SK-N-SH (cell line): ENCODE measurements at regions of chr2 and their contacts with region 1.

Region 1: GRCh38 chr2:1550658-1551316 is 137.5 kb downstream of the TPO start:
- DNase-seq: peak; percentile 96
- H3K4me3 ChIP-seq: peak overlapping the region in 1 of 2 experiments; percentile 25; a peak in 1 of 4 replicates
- H3K27ac ChIP-seq: no peak overlapping the region
- H3K4me1 ChIP-seq: peaks cover 0 to 18% of the 10 kb centered on the region in 2 experiments; a peak in 1 of 4 replicates
- H3K27me3 ChIP-seq: no peaks in the 10 kb centered on the region
- CTCF ChIP-seq: peak; percentile 99
- EP300 ChIP-seq: no peak
- RAD21 ChIP-seq: peak; percentile 73

Region 2: GRCh38 chr2:960061-960736 is 590.6 kb before region 1 on chr2:
- CTCF ChIA-PET with region 1: interaction called, 65 read pairs
- POLR2A ChIA-PET with region 1: no interaction called
- DNase-seq: no peak
- H3K4me3 ChIP-seq: no peak overlapping the region
- H3K27ac ChIP-seq: no peak overlapping the region
- H3K4me1 ChIP-seq: peaks cover 0 to 2% of the 10 kb centered on the region in 2 experiments; a peak in 1 of 4 replicates
- H3K27me3 ChIP-seq: no peaks in the 10 kb centered on the region
- CTCF ChIP-seq: no peak
- EP300 ChIP-seq: no peak
- RAD21 ChIP-seq: no peak

Region 3: DNA sequence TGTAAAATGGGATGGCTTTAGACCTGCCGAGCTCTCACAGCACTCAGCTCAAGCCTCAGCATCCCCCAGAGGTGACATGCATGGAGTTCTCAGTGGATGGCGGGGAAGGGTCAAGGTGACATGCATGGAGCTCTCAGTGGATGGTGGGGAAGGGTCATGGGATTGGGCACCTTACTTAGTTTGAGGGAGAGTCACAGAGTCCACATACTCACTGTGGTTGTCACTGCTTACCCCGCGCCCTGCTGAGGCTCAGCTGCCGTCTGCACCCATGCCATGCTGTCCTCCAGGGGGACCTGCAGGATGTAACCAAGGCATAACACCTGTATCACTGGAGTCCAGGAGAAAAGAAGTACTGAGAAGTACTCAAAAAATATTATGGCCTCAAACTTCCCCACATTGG is 249.7 kb before region 1 on chr2:
- CTCF ChIA-PET with region 1: no interaction called
- POLR2A ChIA-PET with region 1: no interaction called
- DNase-seq: no peak
- H3K4me3 ChIP-seq: no peak overlapping the region
- H3K27ac ChIP-seq: no peak overlapping the region
- H3K4me1 ChIP-seq: no peaks in the 10 kb centered on the region
- H3K27me3 ChIP-seq: no peaks in the 10 kb centered on the region
- CTCF ChIP-seq: no peak
- EP300 ChIP-seq: no peak
- RAD21 ChIP-seq: no peak

Region 4: GRCh38 chr2:1432726-1433125 is 118.1 kb before region 1 on chr2:
- CTCF ChIA-PET with region 1: interaction called, 10 read pairs
- POLR2A ChIA-PET with region 1: no interaction called
- DNase-seq: no peak
- H3K4me3 ChIP-seq: no peak overlapping the region
- H3K27ac ChIP-seq: no peak overlapping the region
- H3K4me1 ChIP-seq: no peaks in the 10 kb centered on the region
- H3K27me3 ChIP-seq: no peaks in the 10 kb centered on the region
- CTCF ChIP-seq: no peak
- EP300 ChIP-seq: no peak
- RAD21 ChIP-seq: no peak

Region 5: DNA sequence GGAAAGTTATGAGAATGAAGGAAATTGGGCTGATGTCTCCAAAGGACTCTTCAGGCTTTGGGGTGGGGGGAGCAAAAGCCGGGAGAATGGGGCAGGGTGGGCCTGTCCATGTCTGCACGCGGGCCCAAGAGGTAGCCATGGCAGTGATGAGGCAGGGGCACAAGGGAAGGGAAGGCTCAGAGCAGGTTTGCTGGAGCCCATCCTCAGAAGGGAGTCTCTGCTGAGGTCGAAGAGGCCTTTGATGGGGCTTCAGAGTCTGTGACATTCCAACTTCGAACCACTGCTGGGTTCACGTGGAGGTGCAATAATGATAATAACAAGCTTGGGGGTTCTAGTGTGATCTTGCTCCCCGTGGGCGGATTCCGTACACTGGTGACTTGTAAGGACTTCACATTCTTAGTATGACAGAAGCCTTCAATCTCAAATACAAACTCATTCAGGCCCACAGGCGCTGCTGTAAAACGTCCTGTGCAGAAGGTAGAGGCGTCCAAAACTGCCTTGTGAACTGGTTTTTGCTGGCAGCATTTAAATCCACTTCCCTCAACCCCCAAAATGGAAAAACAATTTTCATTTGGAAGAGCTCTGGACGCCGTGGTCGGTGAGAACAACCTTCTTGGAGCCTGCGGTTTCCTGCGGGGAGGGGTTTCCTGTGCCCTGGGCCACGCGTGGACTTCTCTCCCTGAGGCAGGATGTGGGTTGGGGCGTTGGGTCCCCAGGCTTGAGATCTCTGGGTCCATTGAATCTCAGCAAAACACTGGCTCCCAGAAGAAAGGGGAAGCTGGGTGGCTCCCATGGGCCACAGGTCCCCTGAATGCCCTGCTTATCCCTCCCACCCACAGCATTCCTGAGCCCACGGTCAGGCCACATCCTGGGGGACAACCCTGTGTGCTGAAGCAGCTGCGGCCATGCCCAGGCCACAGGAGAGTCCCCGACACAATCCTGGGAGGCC is 13.4 kb after region 1 on chr2:
- CTCF ChIA-PET with region 1: interaction called, 108 read pairs
- POLR2A ChIA-PET with region 1: interaction called, 3 read pairs
- DNase-seq: no peak
- H3K4me3 ChIP-seq: no peak overlapping the region
- H3K27ac ChIP-seq: no peak overlapping the region
- H3K4me1 ChIP-seq: no peaks in the 10 kb centered on the region
- H3K27me3 ChIP-seq: no peaks in the 10 kb centered on the region
- CTCF ChIP-seq: no peak
- EP300 ChIP-seq: no peak
- RAD21 ChIP-seq: no peak

Region 6: DNA sequence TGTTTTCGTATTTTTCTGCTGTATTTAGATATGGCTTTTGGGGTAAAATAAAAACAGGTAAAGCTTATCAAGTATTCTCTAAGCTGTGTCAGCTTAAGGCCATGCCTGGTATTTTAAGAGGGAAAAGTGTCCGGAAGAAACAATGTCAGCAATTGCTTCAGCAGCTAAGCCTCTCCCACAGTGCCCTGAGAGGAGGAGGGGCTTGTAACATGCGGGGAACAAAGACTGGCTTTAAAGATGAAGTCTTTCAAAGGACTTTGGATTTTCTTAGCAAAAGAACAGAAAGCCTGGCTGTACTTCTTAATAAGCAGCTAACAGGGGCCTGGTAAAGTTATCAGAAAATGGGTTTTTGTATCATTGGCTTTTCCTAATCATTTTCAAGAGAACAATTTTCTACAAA is 90.7 kb after region 1 on chr2:
- CTCF ChIA-PET with region 1: interaction called, 13 read pairs
- POLR2A ChIA-PET with region 1: no interaction called
- DNase-seq: no peak
- H3K4me3 ChIP-seq: no peak overlapping the region
- H3K27ac ChIP-seq: no peak overlapping the region
- H3K4me1 ChIP-seq: peaks cover 0 to 22% of the 10 kb centered on the region in 2 experiments; a peak in 1 of 4 replicates
- H3K27me3 ChIP-seq: no peaks in the 10 kb centered on the region
- CTCF ChIP-seq: no peak
- EP300 ChIP-seq: no peak
- RAD21 ChIP-seq: no peak

Region 7: DNA sequence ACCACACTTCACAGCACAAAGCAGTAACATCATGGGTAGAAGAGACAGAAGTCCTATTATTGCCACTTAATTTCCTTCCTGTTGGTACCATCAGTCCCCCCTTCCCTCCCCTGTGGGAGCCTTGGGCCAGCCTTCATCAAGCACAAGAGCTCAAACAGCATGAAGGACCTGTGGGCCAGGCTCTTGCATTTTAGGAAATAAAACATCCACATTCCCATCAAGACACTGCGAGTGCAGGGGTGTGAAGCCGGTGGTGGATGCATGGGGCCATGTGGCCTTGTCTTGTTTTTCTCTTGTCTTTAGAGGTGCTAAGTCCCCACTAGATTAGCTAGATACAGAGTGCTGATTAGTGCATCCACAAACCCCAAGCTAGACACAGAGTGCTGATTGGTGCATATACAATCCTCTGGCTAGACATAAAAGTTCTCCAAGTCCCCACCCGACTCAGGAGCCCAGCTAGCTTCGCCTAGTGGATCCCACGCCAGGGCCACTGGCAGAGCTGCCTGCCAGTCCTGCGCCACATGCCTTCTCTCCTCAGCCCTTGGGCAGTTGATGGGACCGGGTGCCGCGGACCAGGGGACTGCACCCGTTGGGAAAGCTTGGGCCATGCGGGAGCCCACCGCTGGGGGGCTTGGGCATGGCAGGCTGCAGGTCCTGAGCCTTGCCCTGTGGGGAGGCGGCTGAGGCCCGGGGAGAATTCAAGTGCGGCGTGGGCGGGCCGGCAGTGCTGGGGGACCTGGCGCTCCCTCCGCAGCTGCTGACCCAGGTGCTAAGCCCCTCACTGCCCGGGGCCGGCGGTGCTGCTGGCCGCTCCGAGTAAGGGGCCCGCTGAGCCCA is 208.2 kb after region 1 on chr2:
- CTCF ChIA-PET with region 1: interaction called, 16 read pairs
- POLR2A ChIA-PET with region 1: no interaction called
- DNase-seq: no peak
- H3K4me3 ChIP-seq: no peak overlapping the region
- H3K27ac ChIP-seq: no peak overlapping the region; a peak in 1 of 4 replicates
- H3K4me1 ChIP-seq: peaks cover 0 to 12% of the 10 kb centered on the region in 2 experiments; a peak in 1 of 4 replicates
- H3K27me3 ChIP-seq: no peaks in the 10 kb centered on the region; the same call in 1 of the 2 replicates
- CTCF ChIP-seq: no peak
- EP300 ChIP-seq: no peak
- RAD21 ChIP-seq: no peak